Calu3 (cell line): ENCODE measurements at regions of chr3 and their contacts with region 1.

Region 1: GRCh38 chr3:148229107-148229506 is 468.6 kb upstream of the AGTR1 start:
- DNase-seq: no peak
- H3K4me3 Mint-ChIP-seq: no peak overlapping the region
- H3K27ac Mint-ChIP-seq: no peak overlapping the region
- H3K4me1 Mint-ChIP-seq: peaks cover 8% of the 10 kb centered on the region
- H3K27me3 Mint-ChIP-seq: no peaks in the 10 kb centered on the region
- CTCF ChIP-seq: no peak

Region 2: GRCh38 chr3:148191966-148192365 is 37.1 kb before region 1 on chr3:
- CTCF ChIA-PET with region 1: no interaction called
- intact Hi-C with region 1: no loop called
- DNase-seq: no peak
- H3K4me3 Mint-ChIP-seq: no peak overlapping the region
- H3K27ac Mint-ChIP-seq: no peak overlapping the region
- H3K4me1 Mint-ChIP-seq: no peaks in the 10 kb centered on the region
- H3K27me3 Mint-ChIP-seq: no peaks in the 10 kb centered on the region
- CTCF ChIP-seq: no peak

Region 3: DNA sequence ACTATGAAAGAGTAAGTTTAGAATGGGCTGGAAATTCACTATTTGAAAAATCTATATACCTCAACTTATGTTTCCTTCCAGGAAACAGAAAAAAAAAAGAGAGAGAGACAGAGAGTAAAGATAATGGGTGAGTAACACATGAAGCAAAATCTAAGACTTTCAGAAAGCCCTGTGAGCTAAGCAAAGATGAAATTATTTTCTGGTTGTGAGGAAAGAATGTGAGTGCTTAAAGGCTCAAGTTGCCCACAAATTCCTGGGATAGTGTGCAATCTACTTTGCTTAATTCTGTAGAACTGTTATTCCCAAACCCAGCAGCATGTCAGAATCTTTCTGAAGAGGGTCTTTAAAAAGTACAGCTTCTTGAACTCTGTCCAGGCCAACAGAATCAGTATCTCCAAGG is 130.9 kb after region 1 on chr3:
- CTCF ChIA-PET with region 1: interaction called, 11 read pairs
- intact Hi-C with region 1: no loop called
- DNase-seq: no peak
- H3K4me3 Mint-ChIP-seq: no peak overlapping the region
- H3K27ac Mint-ChIP-seq: no peak overlapping the region
- H3K4me1 Mint-ChIP-seq: no peaks in the 10 kb centered on the region
- H3K27me3 Mint-ChIP-seq: no peaks in the 10 kb centered on the region
- CTCF ChIP-seq: no peak